Body of pancreas (tissue), 4 donors: ENCODE measurements at regions of chr22 and their contacts with region 1.

Region 1: DNA sequence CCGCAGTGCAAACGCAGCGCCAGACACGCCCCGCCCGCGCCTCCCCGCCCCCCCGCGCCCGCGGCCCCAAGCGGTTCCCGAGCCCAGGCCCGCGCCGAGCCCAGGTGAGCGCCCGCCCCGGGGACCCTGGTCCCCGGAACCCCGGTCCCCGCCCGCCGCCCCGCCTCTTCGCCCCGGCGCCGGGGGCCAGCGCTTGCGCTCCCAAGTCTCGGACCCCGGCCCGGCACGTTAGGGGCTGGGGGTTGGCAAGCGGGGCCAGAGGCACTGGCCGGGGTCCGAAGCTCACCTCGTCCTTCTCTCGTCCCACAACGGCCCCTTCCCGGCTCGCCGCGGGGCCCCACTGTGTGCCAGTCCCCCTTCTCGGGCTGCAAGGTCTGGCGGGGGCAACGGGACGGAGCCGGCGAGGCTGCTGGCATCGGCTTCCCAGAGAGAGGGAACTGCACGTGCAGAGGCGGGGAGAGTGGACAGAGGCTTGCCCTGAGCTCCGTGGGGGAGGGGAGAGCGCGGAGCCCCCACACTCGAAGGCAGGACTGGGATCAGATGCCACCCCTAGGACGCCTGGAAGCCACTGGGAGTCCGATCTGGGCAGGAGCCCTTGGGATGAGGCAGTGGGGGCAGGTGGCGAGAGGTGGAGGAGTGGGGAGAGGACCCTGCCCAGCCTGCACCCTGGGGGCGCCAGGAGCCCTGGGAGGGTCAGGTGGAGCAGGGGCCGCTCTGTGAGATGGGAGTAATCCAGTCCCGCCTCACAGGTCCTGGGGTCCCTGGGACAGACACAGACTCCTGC is 1.8 kb upstream of the AIFM3 start:
- DNase-seq: peak in 1 of 4 donors; percentile 38
- ATAC-seq: peak; percentile 54
- H3K4me3 ChIP-seq: no peak overlapping the region
- H3K27ac ChIP-seq: no peak overlapping the region
- H3K4me1 ChIP-seq: peaks cover 11% of the 10 kb centered on the region
- H3K27me3 ChIP-seq: peaks cover 0 to 3% of the 10 kb centered on the region in 2 donors
- CTCF ChIP-seq: no peak
- POLR2A ChIP-seq: no peak

Region 2: DNA sequence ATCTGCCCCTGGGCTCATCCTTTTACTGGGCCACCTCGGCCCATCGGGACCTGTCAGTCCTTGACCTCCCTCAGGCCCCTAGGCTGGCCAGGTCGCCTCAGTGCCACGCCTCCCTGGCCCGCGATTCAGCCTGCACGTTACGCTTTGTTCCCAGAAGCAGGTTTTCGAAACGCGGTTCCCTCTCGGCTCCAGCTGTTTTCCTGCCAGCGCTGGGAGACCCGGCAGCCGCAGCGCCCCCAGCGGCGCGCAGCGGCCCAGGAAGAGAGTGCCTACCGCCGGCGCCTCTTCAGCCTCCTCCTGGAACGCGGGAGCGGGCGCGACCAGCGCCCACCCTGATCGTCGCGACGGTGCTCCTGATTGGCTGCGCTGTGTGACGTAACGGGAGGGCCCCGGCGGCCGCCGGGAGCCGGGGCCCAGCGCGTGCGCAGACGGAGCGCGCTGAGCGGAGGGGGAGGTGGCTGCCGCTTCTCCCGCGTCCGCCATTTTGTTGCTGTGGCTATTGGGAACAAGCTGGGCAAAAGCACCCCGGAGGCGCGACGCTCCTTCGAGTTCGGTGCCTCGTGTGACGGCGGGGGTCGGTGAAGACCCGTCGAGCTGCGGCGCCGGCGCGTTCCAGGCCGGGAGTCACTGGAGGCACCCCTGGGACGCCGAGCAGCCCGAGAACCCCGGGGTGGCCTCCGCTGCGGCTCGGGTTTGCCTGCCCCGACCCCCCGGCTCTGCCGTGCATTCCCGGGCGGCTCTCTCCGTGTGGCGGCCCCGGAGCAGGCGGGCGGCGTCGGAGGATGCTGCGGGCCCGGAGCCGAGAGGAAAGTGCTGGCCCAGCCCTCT is 48.1 kb before region 1 on chr22 and contains the start of gene CRKL:
- intact Hi-C with region 1: loop called (anchors 10 kb)
- DNase-seq: peak; percentile 98
- ATAC-seq: peak; percentile 98
- H3K4me3 ChIP-seq: peak within 1 kb of the TSS; percentile 71 to 86
- H3K27ac ChIP-seq: peak within 1 kb of the TSS; percentile 92 to 98 (median 96)
- H3K4me1 ChIP-seq: peaks cover 27% of the 10 kb centered on the region
- H3K27me3 ChIP-seq: no peaks in the 10 kb centered on the region
- CTCF ChIP-seq: peak; percentile 89 to 99 (median 97)
- POLR2A ChIP-seq: peak; percentile 77 to 84 (median 77)
- total RNA-seq, gene CRKL: 18.2 to 25.4 TPM

Region 3: DNA sequence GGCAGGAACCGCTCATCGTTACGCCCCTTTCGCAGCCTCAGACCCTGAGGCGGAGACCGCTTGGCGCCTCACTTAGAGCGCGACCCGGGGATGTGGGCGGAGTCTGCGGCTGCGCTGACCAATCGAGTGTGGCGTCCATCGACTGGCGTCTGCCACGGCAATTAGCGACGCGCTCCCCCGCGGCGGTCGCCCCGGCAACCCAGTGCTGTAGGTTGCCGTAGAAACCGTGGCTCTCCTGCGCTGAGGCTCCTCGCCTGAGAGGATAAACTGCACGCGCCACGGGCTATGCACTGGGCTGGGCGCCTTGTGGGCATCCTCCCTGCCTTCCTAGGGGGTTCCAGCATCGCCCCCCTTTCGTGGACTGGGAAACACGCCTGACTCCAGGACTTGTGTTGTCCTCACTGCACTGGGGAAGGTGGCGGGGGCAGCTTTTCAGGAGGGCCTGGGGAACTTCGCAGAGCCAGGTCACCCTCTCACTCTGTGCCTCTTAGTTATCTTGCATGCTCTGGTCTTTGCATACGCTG is 49.0 kb after region 1 on chr22:
- intact Hi-C with region 1: loop called (anchors 10 kb)
- DNase-seq: peak; percentile 62 to 84 (median 80)
- ATAC-seq: peak; percentile 83
- H3K4me3 ChIP-seq: no peak overlapping the region
- H3K27ac ChIP-seq: peak overlapping the region in 3 of 4 donors; percentile 21 to 46 (median 30)
- H3K4me1 ChIP-seq: peaks cover 16% of the 10 kb centered on the region
- H3K27me3 ChIP-seq: no peaks in the 10 kb centered on the region
- CTCF ChIP-seq: no peak
- POLR2A ChIP-seq: no peak